GM12878 (cell line): ENCODE measurements at regions of chr1 and their contacts with region 1.

Region 1: GRCh38 chr1:236489710-236490377 is 33.9 kb upstream of the LGALS8 start:
- DNase-seq: peak; percentile 19
- ATAC-seq: peak; percentile 87
- H3K4me3 ChIP-seq: no peak overlapping the region
- H3K27ac ChIP-seq: no peak overlapping the region
- H3K4me1 ChIP-seq: no peaks in the 10 kb centered on the region
- H3K27me3 ChIP-seq: 0 out of 4 replicates have a peak, but pooled peaks cover 0 to 3% of the 10 kb centered on the region in 2 experiments
- CTCF ChIP-seq: peak in 2 of 3 experiments; percentile 46 to 55; a peak in 3 of 6 replicates
- EP300 ChIP-seq: no peak
- POLR2A ChIP-seq: no peak
- RAD21 ChIP-seq: peak; percentile 72

Region 2: GRCh38 chr1:236113324-236114032 is 376.4 kb before region 1 on chr1:
- CTCF ChIA-PET with region 1: interaction called, 16 read pairs
- POLR2A ChIA-PET with region 1: no interaction called
- RAD21 ChIA-PET with region 1: interaction called, 13 read pairs
- SMC1A ChIA-PET with region 1: interaction called, 30 read pairs
- in situ Hi-C with region 1: loop called (anchors 5 kb)
- intact Hi-C with region 1: loop called (anchors 1 kb)
- DNase-seq: no peak
- ATAC-seq: peak; percentile 47
- H3K4me3 ChIP-seq: no peak overlapping the region
- H3K27ac ChIP-seq: no peak overlapping the region
- H3K4me1 ChIP-seq: no peaks in the 10 kb centered on the region
- H3K27me3 ChIP-seq: no peaks in the 10 kb centered on the region
- CTCF ChIP-seq: no peak
- EP300 ChIP-seq: no peak
- POLR2A ChIP-seq: no peak
- RAD21 ChIP-seq: no peak

Region 3: GRCh38 chr1:236228411-236228810 is 261.4 kb before region 1 on chr1:
- CTCF ChIA-PET with region 1: no interaction called
- POLR2A ChIA-PET with region 1: no interaction called
- RAD21 ChIA-PET with region 1: no interaction called
- SMC1A ChIA-PET with region 1: no interaction called
- in situ Hi-C with region 1: no loop called
- intact Hi-C with region 1: loop called (anchors 10 kb)
- DNase-seq: no peak
- ATAC-seq: no peak
- H3K4me3 ChIP-seq: no peak overlapping the region
- H3K27ac ChIP-seq: no peak overlapping the region
- H3K4me1 ChIP-seq: no peaks in the 10 kb centered on the region
- H3K27me3 ChIP-seq: no peaks in the 10 kb centered on the region
- CTCF ChIP-seq: no peak
- EP300 ChIP-seq: no peak
- POLR2A ChIP-seq: no peak
- RAD21 ChIP-seq: no peak

Region 4: DNA sequence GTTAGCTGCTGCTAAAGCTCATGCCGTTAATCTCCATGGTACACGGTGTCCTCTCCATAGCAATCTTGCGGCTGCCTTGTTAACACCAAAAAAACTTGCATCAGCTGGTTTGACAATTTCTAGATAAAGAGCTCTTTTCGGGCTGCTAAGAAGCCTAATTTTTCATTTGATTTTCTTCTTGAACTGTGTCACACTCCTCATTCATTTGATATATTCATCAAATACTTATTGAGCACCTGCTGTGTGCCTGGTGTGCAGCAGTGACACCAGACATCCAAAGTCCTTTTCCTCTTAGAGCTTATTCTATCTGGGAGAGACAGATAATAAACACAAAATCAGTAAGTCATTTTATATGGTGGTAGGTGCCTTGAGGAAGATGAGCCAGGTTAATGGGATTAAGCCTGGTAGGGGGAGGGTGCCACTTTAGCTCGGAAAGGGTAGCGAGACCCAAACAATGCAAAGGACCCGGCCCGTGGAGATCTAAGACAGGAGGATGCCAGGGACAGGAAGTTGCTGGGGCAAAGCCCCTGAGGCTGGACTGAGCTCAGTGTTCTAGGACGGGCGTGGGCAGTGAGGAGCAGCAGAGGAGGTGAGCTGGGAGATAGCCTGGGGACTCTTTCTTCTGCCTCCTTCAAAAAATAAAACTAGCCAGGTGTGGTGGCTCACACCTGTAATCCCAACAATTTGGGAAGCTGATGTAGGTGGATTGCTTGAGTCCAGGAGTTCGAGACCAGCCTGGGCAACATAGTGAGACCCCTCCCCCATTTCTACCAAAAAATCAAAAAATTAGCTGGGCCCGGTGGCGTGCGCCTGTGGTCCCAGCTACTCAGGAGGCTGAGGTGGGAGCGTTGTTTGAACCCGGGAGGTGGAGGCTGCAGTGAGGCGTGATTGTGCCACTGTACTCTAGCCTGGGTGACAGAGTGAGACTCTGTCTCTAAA is 16.7 kb before region 1 on chr1:
- CTCF ChIA-PET with region 1: interaction called, 5 read pairs
- POLR2A ChIA-PET with region 1: no interaction called
- RAD21 ChIA-PET with region 1: interaction called, 4 read pairs
- SMC1A ChIA-PET with region 1: interaction called, 15 read pairs
- in situ Hi-C with region 1: no loop called
- intact Hi-C with region 1: no loop called
- DNase-seq: no peak
- ATAC-seq: no peak
- H3K4me3 ChIP-seq: no peak overlapping the region
- H3K27ac ChIP-seq: no peak overlapping the region
- H3K4me1 ChIP-seq: no peaks in the 10 kb centered on the region
- H3K27me3 ChIP-seq: no peaks in the 10 kb centered on the region
- CTCF ChIP-seq: no peak
- EP300 ChIP-seq: no peak
- POLR2A ChIP-seq: no peak
- RAD21 ChIP-seq: no peak

Region 5: DNA sequence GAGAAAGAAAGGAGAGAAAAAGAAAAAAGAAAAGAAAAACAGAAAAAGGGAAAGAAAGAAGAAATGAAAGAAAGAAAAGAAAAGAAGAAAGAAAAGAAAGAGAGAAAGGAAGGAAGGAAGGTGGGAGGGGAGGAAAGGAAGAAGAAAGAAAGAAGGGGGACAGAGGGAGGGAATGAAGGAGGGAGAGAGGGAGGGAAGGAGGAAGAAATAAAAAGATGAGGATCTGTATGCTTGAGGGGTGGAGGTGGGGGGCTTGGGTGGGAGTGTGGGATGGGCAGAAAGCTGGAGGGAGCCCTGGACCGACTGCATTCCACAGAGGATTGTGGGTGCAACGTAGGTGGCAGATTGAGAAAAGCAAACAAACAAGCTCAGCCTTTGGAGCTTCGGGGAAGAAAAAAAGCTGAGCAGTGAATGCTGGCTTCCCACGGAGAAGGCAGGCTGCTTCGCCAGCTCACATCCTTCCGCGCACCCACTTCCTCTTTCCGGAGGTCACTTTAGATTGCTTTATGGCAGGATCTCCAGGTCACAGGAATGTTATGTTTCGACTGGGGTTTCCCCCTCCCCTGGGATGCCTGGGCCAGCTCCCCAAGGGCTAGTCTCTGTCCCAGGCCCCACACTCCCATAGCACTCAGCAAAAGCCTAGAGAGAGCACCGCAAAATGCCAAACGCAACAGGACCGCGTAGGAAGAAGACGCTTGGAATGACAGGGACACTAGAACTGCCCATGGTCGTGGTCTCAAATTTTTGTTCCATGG is 13.2 kb after region 1 on chr1:
- CTCF ChIA-PET with region 1: interaction called, 10 read pairs
- POLR2A ChIA-PET with region 1: interaction called, 3 read pairs
- RAD21 ChIA-PET with region 1: no interaction called
- SMC1A ChIA-PET with region 1: interaction called, 6 read pairs
- in situ Hi-C with region 1: no loop called
- intact Hi-C with region 1: no loop called
- DNase-seq: no peak
- ATAC-seq: peak; percentile 40
- H3K4me3 ChIP-seq: no peak overlapping the region
- H3K27ac ChIP-seq: no peak overlapping the region
- H3K4me1 ChIP-seq: no peaks in the 10 kb centered on the region; the same call in 1 of the 2 replicates
- H3K27me3 ChIP-seq: peaks cover 0 to 2% of the 10 kb centered on the region in 2 experiments; a peak in 2 of 4 replicates
- CTCF ChIP-seq: no peak
- EP300 ChIP-seq: no peak
- POLR2A ChIP-seq: no peak
- RAD21 ChIP-seq: no peak

Region 6: GRCh38 chr1:236543065-236543669 is 53.3 kb after region 1 on chr1:
- CTCF ChIA-PET with region 1: no interaction called
- POLR2A ChIA-PET with region 1: no interaction called
- RAD21 ChIA-PET with region 1: no interaction called
- SMC1A ChIA-PET with region 1: no interaction called
- in situ Hi-C with region 1: no loop called
- intact Hi-C with region 1: no loop called
- DNase-seq: no peak
- ATAC-seq: peak; percentile 55
- H3K4me3 ChIP-seq: no peak overlapping the region
- H3K27ac ChIP-seq: no peak overlapping the region
- H3K4me1 ChIP-seq: no peaks in the 10 kb centered on the region
- H3K27me3 ChIP-seq: no peaks in the 10 kb centered on the region
- CTCF ChIP-seq: 0 out of 6 replicates have a peak, but pooled peaks of 1 of the 3 experiments have one; percentile 17
- EP300 ChIP-seq: no peak
- POLR2A ChIP-seq: no peak; the same call in 1 of the 2 replicates
- RAD21 ChIP-seq: no peak